ENCODE measurements at regions of chr17 and their contacts with region 1.

Region 1: GRCh38 chr17:2041561-2042366 is at the start of gene OVCA2:
- DNase-seq: peak; percentile 94
- ATAC-seq: peak; percentile 93 to 97 (median 95)
- H3K4me3 ChIP-seq: peak within 1 kb of the TSS; percentile 53 to 97 (median 80)
- H3K27ac ChIP-seq: peak within 1 kb of the TSS; percentile 72 to 98 (median 93)
- H3K4me1 ChIP-seq: peaks cover 8 to 41% (median 26%) of the 10 kb centered on the region in 9 donors
- H3K27me3 ChIP-seq: no peaks in the 10 kb centered on the region
- CTCF ChIP-seq: peak; percentile 15 to 80 (median 64)
- total RNA-seq, gene OVCA2: 15.3 to 25.4 (median 17.6) TPM

Region 2: GRCh38 chr17:1661045-1661444 is 380.7 kb before region 1 on chr17:
- intact Hi-C with region 1: loop called in 2 of 10 experiments (anchors 10 kb)
- DNase-seq: no peak
- ATAC-seq: no peak
- H3K4me3 ChIP-seq: no peak overlapping the region
- H3K27ac ChIP-seq: no peak overlapping the region
- H3K4me1 ChIP-seq: no peaks in the 10 kb centered on the region
- H3K27me3 ChIP-seq: no peaks in the 10 kb centered on the region
- CTCF ChIP-seq: no peak

Region 3: GRCh38 chr17:1724506-1725362 is 317.0 kb before region 1 on chr17 and contains the start of gene WDR81:
- intact Hi-C with region 1: loop called in 3 of 10 experiments (anchors 10 kb)
- DNase-seq: peak; percentile 93
- ATAC-seq: peak; percentile 73 to 92 (median 89)
- H3K4me3 ChIP-seq: peak within 1 kb of the TSS; percentile 66 to 81 (median 72)
- H3K27ac ChIP-seq: peak within 1 kb of the TSS; percentile 76 to 97 (median 86)
- H3K4me1 ChIP-seq: peaks cover 11 to 78% (median 28%) of the 10 kb centered on the region in 9 donors
- H3K27me3 ChIP-seq: no peaks in the 10 kb centered on the region
- CTCF ChIP-seq: peak in 2 of 9 donors; percentile 2 to 26
- total RNA-seq, gene WDR81: 7.7 to 16.9 (median 9.2) TPM

Measured in heart right ventricle (tissue), 16 donors.